Activated CD4-positive, alpha-beta memory T cell treated with anti-CD3 and anti-CD28 coated beads, Interleukin-2, amount 10 ng/mL, durations not matched to agents 7 days and 5 days (primary cell): ENCODE measurements at regions of chr6 and their contacts with region 1.

Region 1: GRCh38 chr6:31652925-31653718 is 661 bp upstream of the BAG6 start:
- DNase-seq: no peak
- H3K4me3 Mint-ChIP-seq: peak overlapping the region; percentile 97
- H3K27ac Mint-ChIP-seq: peak overlapping the region; percentile 98
- H3K4me1 Mint-ChIP-seq: peaks cover 66% of the 10 kb centered on the region
- H3K27me3 Mint-ChIP-seq: no peaks in the 10 kb centered on the region

Region 2: DNA sequence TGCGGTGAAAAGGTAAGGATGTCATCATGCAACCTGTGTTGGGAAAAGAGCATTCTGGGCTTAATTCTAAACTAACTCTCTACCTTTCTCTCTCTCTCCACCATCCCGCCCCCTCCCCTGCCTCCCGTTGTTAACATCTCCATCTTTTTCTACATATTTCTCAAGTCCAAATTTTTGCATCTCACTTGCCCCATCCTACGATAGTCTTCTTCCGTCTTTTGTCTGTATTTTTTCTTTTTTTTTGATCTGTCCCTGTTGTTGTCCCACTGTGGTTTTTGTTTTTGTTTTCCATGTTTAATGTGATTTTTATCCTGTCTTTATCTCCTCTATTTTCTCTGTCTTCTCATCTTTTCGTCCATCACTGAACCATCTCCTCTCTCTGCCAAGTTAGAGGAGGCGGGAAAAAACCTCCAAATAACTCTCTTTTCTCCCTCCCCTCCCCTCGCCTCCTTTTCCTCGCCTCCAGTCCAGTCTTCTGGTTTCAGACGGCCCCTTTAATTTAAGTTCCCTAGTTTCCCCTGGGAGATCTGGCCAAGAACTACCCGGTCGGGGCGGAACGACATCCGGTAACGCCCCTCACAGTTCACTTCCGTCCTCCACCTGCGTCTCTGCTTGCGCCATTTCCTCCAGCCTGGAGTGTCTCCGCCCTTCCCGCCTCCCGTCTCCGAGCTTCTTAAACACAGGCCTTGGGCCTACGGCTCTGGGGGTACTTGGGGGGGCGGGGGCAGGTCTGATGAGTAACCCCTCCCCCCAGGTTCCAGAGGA is 106.0 kb before region 1 on chr6 and contains the start of gene NFKBIL1:
- CTCF ChIA-PET with region 1: interaction called, 3 read pairs
- POLR2A ChIA-PET with region 1: interaction called, 37 read pairs
- DNase-seq: peak; percentile 93
- H3K4me3 Mint-ChIP-seq: peak within 1 kb of the TSS; percentile 76
- H3K27ac Mint-ChIP-seq: peak within 1 kb of the TSS; percentile 69
- H3K4me1 Mint-ChIP-seq: peaks cover 62% of the 10 kb centered on the region
- H3K27me3 Mint-ChIP-seq: no peaks in the 10 kb centered on the region
- total RNA-seq, gene NFKBIL1: 22.8 to 23.6 TPM

Region 3: DNA sequence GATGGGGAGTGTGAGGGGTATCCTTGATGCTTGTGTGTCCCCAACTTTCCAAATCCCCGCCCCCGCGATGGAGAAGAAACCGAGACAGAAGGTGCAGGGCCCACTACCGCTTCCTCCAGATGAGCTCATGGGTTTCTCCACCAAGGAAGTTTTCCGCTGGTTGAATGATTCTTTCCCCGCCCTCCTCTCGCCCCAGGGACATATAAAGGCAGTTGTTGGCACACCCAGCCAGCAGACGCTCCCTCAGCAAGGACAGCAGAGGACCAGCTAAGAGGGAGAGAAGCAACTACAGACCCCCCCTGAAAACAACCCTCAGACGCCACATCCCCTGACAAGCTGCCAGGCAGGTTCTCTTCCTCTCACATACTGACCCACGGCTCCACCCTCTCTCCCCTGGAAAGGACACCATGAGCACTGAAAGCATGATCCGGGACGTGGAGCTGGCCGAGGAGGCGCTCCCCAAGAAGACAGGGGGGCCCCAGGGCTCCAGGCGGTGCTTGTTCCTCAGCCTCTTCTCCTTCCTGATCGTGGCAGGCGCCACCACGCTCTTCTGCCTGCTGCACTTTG is 77.7 kb before region 1 on chr6 and contains the start of gene TNF:
- CTCF ChIA-PET with region 1: interaction called, 5 read pairs
- POLR2A ChIA-PET with region 1: interaction called, 12 read pairs
- DNase-seq: peak; percentile 91
- H3K4me3 Mint-ChIP-seq: peak within 1 kb of the TSS; percentile 94
- H3K27ac Mint-ChIP-seq: peak within 1 kb of the TSS; percentile 96
- H3K4me1 Mint-ChIP-seq: peaks cover 73% of the 10 kb centered on the region
- H3K27me3 Mint-ChIP-seq: peaks cover 2% of the 10 kb centered on the region
- total RNA-seq, gene TNF: 124 to 130 TPM

Region 4: DNA sequence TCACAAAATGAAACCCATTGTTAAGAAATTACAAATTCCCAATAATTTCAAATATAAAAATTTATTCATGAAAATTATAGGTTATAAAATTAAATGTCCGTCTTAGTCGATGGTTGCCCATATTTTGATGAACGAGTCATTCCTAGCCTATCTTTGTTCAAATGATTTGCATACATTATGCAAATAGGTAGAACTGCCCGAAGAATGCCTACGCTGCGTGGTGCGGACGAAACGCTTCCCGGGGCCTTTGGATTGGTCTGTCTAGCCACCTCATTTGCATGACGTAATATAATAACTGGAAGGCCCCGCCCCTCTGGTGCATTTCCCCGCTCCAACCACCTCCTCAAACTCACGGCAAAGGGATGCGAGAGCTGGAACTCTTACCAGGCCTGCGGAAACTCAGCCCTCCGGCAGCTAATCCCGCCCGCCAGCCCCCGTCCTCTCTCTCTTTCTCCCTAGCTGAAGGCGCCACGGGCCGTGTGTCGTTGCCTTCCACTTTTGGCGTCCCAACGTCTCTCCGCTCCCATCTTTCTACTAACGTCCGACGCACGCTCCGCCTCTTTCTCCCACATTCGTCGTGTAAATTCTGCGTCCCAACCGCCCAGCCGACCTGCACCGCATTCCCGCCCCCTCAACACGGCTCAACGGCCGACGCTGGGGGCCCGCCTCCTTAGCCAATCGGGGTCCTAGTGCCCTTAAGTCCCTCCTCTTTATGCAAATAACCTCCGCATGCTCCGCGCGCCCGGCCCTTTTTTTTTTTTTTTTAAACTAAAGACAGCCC is 33.1 kb before region 1 on chr6:
- CTCF ChIA-PET with region 1: interaction called, 7 read pairs
- POLR2A ChIA-PET with region 1: interaction called, 60 read pairs
- DNase-seq: peak; percentile 98
- H3K4me3 Mint-ChIP-seq: peak overlapping the region; percentile 81
- H3K27ac Mint-ChIP-seq: peak overlapping the region; percentile 95
- H3K4me1 Mint-ChIP-seq: peaks cover 50% of the 10 kb centered on the region
- H3K27me3 Mint-ChIP-seq: no peaks in the 10 kb centered on the region

Region 5: DNA sequence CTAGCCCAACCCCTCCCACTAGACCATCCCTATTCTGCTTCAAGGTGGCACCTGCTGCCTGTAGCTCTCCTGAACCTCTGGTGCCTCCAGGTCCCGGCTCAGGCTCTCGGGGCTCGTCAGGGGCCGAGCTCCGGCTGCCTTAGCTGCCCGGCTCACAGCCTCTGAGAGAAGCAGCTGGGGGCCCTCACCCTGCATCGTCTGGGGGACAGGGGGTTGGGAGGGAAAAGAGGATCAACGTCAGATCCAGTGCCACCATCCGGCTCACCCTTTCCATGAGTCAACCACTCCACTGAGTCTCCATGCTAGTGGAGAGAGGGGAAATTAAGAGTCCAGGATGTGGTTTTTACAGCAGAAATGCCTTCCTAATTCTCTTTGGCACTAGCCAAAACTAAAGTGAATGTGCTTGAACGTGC is 13.7 kb before region 1 on chr6:
- CTCF ChIA-PET with region 1: no interaction called
- POLR2A ChIA-PET with region 1: interaction called, 17 read pairs
- DNase-seq: no peak
- H3K4me3 Mint-ChIP-seq: no peak overlapping the region
- H3K27ac Mint-ChIP-seq: peak overlapping the region; percentile 54
- H3K4me1 Mint-ChIP-seq: peaks cover 8% of the 10 kb centered on the region
- H3K27me3 Mint-ChIP-seq: no peaks in the 10 kb centered on the region

Region 6: DNA sequence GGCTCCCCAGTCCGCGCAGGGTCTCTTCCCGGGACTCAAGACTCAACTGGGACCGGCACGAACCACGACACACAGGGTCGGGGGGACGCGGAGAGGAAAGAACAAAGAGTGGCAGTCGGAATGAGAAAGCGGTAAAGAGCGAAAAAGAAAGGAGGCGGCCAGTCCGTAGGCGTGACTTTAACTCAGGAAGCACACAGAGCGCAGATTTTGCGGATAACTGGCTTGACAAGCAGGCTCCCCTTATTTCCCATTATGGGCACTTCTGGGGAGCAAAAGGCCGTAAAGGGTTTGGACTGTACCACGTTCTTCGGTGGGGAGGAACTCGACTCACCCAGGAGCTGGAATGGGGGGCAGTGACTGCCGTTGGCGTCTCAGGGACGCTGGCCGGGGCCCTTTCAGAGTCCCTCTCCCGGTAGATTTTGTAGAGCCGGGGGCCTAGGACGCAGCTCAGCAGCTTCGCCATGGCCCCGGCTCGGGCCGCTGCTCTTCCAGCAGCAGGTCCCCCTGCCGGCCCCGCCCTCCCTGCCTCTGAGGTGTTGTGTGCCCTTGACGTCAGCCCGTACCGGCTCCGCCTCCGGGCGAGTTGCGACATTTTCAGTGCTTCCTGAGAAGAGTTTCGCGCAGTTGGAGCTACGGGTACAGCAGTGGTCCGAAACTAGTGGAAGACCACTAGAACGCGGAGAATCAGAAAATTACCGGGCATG is 49.8 kb after region 1 on chr6 and contains the start of gene ABHD16A:
- CTCF ChIA-PET with region 1: no interaction called
- POLR2A ChIA-PET with region 1: interaction called, 18 read pairs
- DNase-seq: peak; percentile 98
- H3K4me3 Mint-ChIP-seq: peak within 1 kb of the TSS; percentile 98
- H3K27ac Mint-ChIP-seq: peak within 1 kb of the TSS; percentile 95
- H3K4me1 Mint-ChIP-seq: peaks cover 32% of the 10 kb centered on the region
- H3K27me3 Mint-ChIP-seq: no peaks in the 10 kb centered on the region
- total RNA-seq, gene ABHD16A: 53.1 to 55.0 TPM

Region 7: GRCh38 chr6:31763619-31763940 is 110.5 kb after region 1 on chr6:
- CTCF ChIA-PET with region 1: no interaction called
- POLR2A ChIA-PET with region 1: no interaction called
- DNase-seq: no peak
- H3K4me3 Mint-ChIP-seq: no peak overlapping the region
- H3K27ac Mint-ChIP-seq: peak overlapping the region; percentile 2
- H3K4me1 Mint-ChIP-seq: peaks cover 14% of the 10 kb centered on the region
- H3K27me3 Mint-ChIP-seq: no peaks in the 10 kb centered on the region

Region 8: DNA sequence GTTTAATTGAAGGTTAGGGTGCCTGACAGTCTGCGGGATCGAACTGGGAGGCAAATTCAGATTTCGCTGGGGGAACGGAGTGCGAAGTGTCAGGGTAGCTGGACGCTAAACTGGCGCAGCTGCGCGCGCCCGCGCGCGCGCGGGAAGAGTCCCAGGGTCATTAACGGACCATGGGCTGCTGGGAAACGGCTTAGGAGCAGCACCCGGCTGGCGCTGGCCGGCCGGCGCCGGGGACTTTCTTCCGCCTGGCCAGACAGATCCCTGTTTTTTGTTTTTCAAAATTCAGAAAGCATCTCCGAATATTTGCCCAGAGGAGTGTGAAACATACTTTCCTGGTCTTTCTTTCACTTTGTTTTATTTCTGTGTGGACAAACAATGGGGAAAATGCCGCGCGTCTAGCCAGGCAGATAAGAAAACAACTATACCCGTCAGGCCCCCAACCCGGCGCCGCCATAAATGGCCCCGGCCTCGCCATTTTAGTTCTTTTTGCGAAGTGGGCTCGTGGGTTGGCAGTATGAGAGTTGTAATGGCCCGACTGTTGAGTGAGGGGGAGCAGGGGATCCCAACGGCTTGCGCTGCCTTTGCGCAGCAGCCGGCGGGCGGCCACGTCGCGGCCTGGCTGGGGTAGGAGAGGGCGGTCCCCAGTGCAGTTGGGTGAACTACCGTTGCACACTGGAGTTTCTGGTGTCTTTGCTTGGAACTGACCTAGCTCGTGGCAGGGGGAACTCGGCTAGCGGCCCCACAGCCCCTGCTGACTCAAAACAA is 181.5 kb after region 1 on chr6:
- CTCF ChIA-PET with region 1: interaction called, 7 read pairs
- POLR2A ChIA-PET with region 1: interaction called, 18 read pairs
- DNase-seq: peak; percentile 79
- H3K4me3 Mint-ChIP-seq: peak overlapping the region; percentile 81
- H3K27ac Mint-ChIP-seq: peak overlapping the region; percentile 91
- H3K4me1 Mint-ChIP-seq: peaks cover 56% of the 10 kb centered on the region
- H3K27me3 Mint-ChIP-seq: no peaks in the 10 kb centered on the region